HepG2 (cell line): ENCODE measurements at regions of chrX and their contacts with region 1.

Region 1: GRCh38 chrX:130060122-130061069 is 49.9 kb downstream of the ELF4 start:
- DNase-seq: peak; percentile 30
- ATAC-seq: peak; percentile 93
- H3K4me3 ChIP-seq: peak overlapping the region in 2 of 3 experiments; percentile 46 to 52; a peak in 3 of 6 replicates
- H3K27ac ChIP-seq: no peak overlapping the region
- H3K4me1 ChIP-seq: peaks cover 9% of the 10 kb centered on the region; the same call in 1 of the 2 replicates
- H3K27me3 ChIP-seq: no peaks in the 10 kb centered on the region
- CTCF ChIP-seq: peak; percentile 92
- EP300 ChIP-seq: no peak
- POLR2A ChIP-seq: peak in 1 of 2 experiments; percentile 41; a peak in 1 of 4 replicates
- RAD21 ChIP-seq: peak; percentile 86

Region 2: DNA sequence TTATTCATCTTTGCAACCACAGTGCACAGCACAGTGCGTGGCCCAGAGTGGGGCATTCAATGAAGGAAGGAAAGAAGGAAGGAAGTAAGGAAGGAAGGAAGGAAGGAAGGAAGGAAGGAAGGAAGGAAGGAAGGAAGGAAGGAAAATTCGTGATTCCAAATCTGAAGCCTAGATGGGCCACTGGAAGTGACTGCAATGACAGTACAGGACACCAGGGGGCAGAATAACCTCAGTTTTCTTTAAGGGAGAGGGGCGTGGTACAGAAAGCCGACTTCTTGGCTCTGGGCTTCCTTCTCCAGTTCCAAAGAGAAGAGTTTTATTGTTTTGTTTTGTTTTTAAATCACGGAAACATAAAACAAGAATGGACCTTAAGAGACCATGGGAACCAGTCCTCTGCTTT is 453.5 kb before region 1 on chrX:
- CTCF ChIA-PET with region 1: no interaction called
- POLR2A ChIA-PET with region 1: no interaction called
- in situ Hi-C with region 1: loop called (anchors 25 kb)
- intact Hi-C with region 1: no loop called
- DNase-seq: peak; percentile 30
- ATAC-seq: peak; percentile 44; the same call in 2 of the 3 replicates
- H3K4me3 ChIP-seq: no peak overlapping the region
- H3K27ac ChIP-seq: no peak overlapping the region
- H3K4me1 ChIP-seq: 0 out of 2 replicates have a peak, but pooled peaks cover 8% of the 10 kb centered on the region
- H3K27me3 ChIP-seq: no peaks in the 10 kb centered on the region
- CTCF ChIP-seq: peak; percentile 78
- EP300 ChIP-seq: no peak
- POLR2A ChIP-seq: no peak
- RAD21 ChIP-seq: 0 out of 2 replicates have a peak, but pooled peaks have one; percentile 45

Region 3: DNA sequence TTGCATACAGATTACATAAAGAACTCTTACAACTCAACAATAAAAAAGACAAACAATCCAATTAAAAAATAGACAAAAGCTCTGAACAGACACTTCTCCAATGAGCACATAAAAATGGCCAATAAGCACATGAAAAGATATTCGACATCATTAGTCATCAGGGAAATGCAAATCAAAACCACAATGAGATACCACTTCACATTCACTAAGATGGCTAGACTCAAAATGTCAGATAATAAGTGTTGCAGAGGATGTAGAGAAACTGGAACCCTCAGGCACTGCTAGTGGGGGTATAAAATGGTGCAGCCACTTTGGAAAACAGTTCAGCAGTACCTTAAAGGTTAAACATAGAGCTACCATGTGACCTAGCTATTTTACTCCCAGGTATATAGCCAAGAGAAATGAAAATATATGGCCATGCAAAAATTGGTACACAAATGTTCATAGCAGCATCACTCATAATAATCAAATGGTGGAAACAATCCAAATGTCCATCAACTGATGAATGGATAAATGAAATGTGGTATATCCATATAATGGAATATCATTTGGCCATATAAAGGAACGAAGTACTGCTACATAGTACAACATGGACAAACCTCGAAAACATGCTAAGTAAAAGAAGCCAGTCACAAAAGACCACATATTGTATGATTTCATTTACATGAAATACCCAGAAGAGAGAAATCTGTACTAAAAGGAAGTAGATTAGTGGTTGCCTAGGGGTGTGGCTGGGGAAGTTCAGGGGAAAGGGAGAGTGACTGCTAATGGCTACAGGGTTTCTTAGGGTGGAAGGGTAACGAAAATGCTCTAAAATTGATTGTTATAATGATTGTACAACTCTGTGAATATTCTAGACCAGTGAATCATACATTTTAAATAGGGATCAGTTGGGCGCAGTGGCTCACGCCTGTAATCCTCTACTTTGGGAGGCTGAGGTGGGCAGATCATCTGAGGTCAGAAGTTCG is 251.3 kb before region 1 on chrX:
- CTCF ChIA-PET with region 1: no interaction called
- POLR2A ChIA-PET with region 1: no interaction called
- in situ Hi-C with region 1: no loop called
- intact Hi-C with region 1: no loop called
- DNase-seq: no peak
- ATAC-seq: no peak
- H3K4me3 ChIP-seq: no peak overlapping the region
- H3K27ac ChIP-seq: no peak overlapping the region
- H3K4me1 ChIP-seq: no peaks in the 10 kb centered on the region
- H3K27me3 ChIP-seq: no peaks in the 10 kb centered on the region
- CTCF ChIP-seq: no peak
- EP300 ChIP-seq: no peak
- POLR2A ChIP-seq: no peak
- RAD21 ChIP-seq: no peak

Region 4: GRCh38 chrX:129925305-129926092 is 134.9 kb before region 1 on chrX:
- CTCF ChIA-PET with region 1: no interaction called
- POLR2A ChIA-PET with region 1: no interaction called
- in situ Hi-C with region 1: no loop called
- intact Hi-C with region 1: loop called (anchors 2 kb)
- DNase-seq: peak; percentile 34
- ATAC-seq: peak; percentile 83
- H3K4me3 ChIP-seq: no peak overlapping the region
- H3K27ac ChIP-seq: no peak overlapping the region
- H3K4me1 ChIP-seq: no peaks in the 10 kb centered on the region
- H3K27me3 ChIP-seq: no peaks in the 10 kb centered on the region
- CTCF ChIP-seq: peak; percentile 75
- EP300 ChIP-seq: no peak
- POLR2A ChIP-seq: no peak
- RAD21 ChIP-seq: 0 out of 2 replicates have a peak, but pooled peaks have one; percentile 50

Region 5: GRCh38 chrX:130110379-130111219 is 50.2 kb after region 1 on chrX and contains the start of gene ELF4:
- CTCF ChIA-PET with region 1: no interaction called
- POLR2A ChIA-PET with region 1: no interaction called
- in situ Hi-C with region 1: no loop called
- intact Hi-C with region 1: no loop called
- DNase-seq: no peak
- ATAC-seq: peak; percentile 20
- H3K4me3 ChIP-seq: peak within 1 kb of the TSS; percentile 34 to 67 (median 55); a peak in 4 of 6 replicates
- H3K27ac ChIP-seq: no peak within 1 kb of the TSS
- H3K4me1 ChIP-seq: peaks cover 21% of the 10 kb centered on the region
- H3K27me3 ChIP-seq: no peaks in the 10 kb centered on the region
- CTCF ChIP-seq: no peak
- EP300 ChIP-seq: no peak
- POLR2A ChIP-seq: no peak
- RAD21 ChIP-seq: no peak
- total RNA-seq, gene ELF4: 1.3 and 1.5 TPM in 2 replicates

Region 6: GRCh38 chrX:130147631-130148030 is 87.2 kb after region 1 on chrX:
- CTCF ChIA-PET with region 1: no interaction called
- POLR2A ChIA-PET with region 1: no interaction called
- in situ Hi-C with region 1: no loop called
- intact Hi-C with region 1: no loop called
- DNase-seq: no peak
- ATAC-seq: no peak
- H3K4me3 ChIP-seq: no peak overlapping the region
- H3K27ac ChIP-seq: no peak overlapping the region
- H3K4me1 ChIP-seq: no peaks in the 10 kb centered on the region
- H3K27me3 ChIP-seq: no peaks in the 10 kb centered on the region
- CTCF ChIP-seq: no peak
- EP300 ChIP-seq: no peak
- POLR2A ChIP-seq: no peak
- RAD21 ChIP-seq: no peak

Region 7: DNA sequence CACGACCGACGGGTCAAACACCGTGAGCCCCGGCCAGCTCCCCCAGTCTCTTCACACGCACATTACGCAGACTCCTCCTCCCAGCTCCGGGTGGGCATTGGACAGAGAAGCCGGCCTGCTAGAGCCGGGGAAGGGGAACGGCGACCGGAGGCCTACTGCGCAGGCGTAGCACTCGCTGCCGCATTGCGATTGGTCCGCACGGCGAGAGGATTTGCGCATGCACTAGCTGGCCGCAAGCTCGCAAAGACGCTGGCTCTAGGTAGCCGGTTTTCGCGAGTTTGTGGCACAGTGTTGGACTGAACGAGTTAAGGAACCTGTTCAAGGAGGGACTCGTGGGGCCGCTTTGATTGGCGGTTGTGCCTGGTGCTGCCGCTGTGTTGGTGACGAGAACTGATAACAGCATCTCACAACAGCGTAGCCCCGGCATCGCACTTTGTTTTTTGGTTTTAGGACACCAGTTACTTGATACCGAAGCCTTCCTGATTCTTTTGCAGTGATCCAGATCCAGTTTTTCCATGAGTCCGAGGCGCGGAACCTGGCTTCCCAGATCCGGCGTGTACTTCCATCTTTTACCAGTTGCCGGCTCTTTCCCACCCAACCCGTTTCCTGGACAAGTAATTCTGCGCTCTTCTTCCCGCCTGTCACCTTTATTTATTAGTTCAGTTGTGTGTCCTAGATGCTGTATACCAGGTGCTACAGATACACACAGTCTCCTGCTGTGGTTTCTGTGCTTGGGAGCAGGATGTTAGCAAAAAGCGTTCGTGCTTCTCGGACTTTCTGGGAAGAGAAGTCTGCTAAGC is 105.5 kb after region 1 on chrX and contains the start of gene AIFM1:
- CTCF ChIA-PET with region 1: no interaction called
- POLR2A ChIA-PET with region 1: no interaction called
- in situ Hi-C with region 1: no loop called
- intact Hi-C with region 1: no loop called
- DNase-seq: peak; percentile 88
- ATAC-seq: peak; percentile 98
- H3K4me3 ChIP-seq: peak within 1 kb of the TSS; percentile 76 to 80 (median 77)
- H3K27ac ChIP-seq: peak within 1 kb of the TSS; percentile 89
- H3K4me1 ChIP-seq: peaks cover 34% of the 10 kb centered on the region
- H3K27me3 ChIP-seq: no peaks in the 10 kb centered on the region; a peak in 1 of 5 replicates
- CTCF ChIP-seq: no peak
- EP300 ChIP-seq: no peak
- POLR2A ChIP-seq: peak; percentile 72 to 73
- RAD21 ChIP-seq: no peak
- total RNA-seq, gene AIFM1: 46.9 and 69.3 TPM in 2 replicates